H1 (cell line): ENCODE measurements at regions of chr9 and their contacts with region 1.

Region 1: GRCh38 chr9:69346998-69347397 is 22.0 kb downstream of the ENTREP1 start:
- DNase-seq: no peak
- H3K4me3 ChIP-seq: no peak overlapping the region
- H3K27ac ChIP-seq: no peak overlapping the region
- H3K4me1 ChIP-seq: peaks cover 0 to 7% (median 3%) of the 10 kb centered on the region in 4 experiments; a peak in 4 of 7 replicates
- H3K27me3 ChIP-seq: no peaks in the 10 kb centered on the region
- CTCF ChIP-seq: no peak
- EP300 ChIP-seq: no peak
- POLR2A ChIP-seq: no peak
- RAD21 ChIP-seq: no peak

Region 2: DNA sequence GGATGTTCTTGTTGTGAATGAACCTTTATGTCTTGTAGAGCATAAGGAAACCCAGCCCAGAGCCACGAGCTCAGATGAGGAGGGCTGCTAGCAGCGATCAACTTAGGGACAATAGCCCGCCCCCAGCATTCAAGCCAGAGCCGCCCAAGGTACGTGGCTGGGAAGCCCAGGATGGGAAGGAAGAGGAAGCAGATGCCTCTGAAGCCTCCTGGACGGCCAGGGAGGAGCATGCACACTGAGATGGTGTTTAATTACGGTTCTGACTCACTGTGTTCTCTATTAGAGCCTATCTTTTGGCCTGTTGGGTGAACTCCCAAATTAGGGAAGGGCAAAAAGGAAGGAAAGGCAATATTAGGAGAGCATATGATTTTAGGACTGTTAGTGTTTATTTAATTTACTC is 97.7 kb before region 1 on chr9:
- CTCF ChIA-PET with region 1: no interaction called
- POLR2A ChIA-PET with region 1: no interaction called
- DNase-seq: no peak
- H3K4me3 ChIP-seq: no peak overlapping the region
- H3K27ac ChIP-seq: no peak overlapping the region; the same call in 1 of the 2 replicates
- H3K4me1 ChIP-seq: no peaks in the 10 kb centered on the region
- H3K27me3 ChIP-seq: no peaks in the 10 kb centered on the region
- CTCF ChIP-seq: no peak
- EP300 ChIP-seq: no peak
- POLR2A ChIP-seq: no peak
- RAD21 ChIP-seq: no peak

Region 3: DNA sequence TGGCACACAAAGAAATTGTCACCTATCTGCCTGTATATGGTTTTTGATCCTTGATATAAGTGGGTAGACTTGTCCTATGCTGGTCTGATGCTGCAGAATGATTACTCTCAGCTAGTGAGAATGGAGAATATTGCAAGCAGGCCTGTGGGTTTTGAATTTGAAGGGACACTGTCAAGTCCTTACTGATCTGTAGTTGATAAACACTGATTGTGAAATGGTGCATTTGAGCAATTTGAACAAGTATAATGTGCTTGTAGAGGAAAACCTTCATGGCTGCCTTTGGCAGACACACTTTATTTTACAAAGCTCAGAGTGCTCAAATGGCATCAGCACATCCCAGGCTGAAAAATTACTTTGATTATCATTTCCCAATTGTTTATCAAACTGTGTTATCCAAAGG is 12.7 kb before region 1 on chr9:
- CTCF ChIA-PET with region 1: interaction called, 3 read pairs
- POLR2A ChIA-PET with region 1: interaction called, 15 read pairs
- DNase-seq: no peak
- H3K4me3 ChIP-seq: no peak overlapping the region
- H3K27ac ChIP-seq: no peak overlapping the region
- H3K4me1 ChIP-seq: peaks cover 0 to 7% (median 2%) of the 10 kb centered on the region in 4 experiments; a peak in 3 of 7 replicates
- H3K27me3 ChIP-seq: no peaks in the 10 kb centered on the region
- CTCF ChIP-seq: no peak
- EP300 ChIP-seq: no peak
- POLR2A ChIP-seq: no peak
- RAD21 ChIP-seq: no peak

Region 4: DNA sequence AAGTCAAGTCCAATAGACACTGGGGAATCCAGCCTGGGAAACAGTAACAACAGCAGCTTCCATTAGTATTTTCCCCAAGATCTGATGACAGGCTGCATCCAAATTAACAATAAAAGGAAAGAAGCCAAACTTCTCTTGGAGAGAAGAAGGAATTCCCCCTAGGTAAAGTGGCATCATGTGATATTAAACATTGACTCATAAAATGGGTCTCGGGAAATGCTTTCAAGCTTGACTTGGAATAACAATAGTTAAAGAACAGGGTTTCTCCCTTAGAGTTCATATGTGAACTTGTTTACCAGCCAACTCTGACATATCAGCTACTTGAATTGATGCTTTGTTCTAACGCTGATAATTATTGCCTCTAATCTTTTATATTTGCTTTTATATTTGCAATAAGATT is 23.4 kb after region 1 on chr9:
- CTCF ChIA-PET with region 1: no interaction called
- POLR2A ChIA-PET with region 1: no interaction called
- DNase-seq: no peak
- H3K4me3 ChIP-seq: no peak overlapping the region
- H3K27ac ChIP-seq: no peak overlapping the region
- H3K4me1 ChIP-seq: no peaks in the 10 kb centered on the region
- H3K27me3 ChIP-seq: no peaks in the 10 kb centered on the region
- CTCF ChIP-seq: no peak
- EP300 ChIP-seq: no peak
- POLR2A ChIP-seq: no peak
- RAD21 ChIP-seq: no peak